BJ (cell line): ENCODE measurements at regions of chr3 and their contacts with region 1.

Region 1: GRCh38 chr3:8970971-8971589 is 7.8 kb upstream of the RAD18 start:
- DNase-seq: no peak
- H3K4me3 ChIP-seq: no peak overlapping the region
- H3K27me3 ChIP-seq: no peaks in the 10 kb centered on the region
- CTCF ChIP-seq: peak; percentile 93

Region 2: DNA sequence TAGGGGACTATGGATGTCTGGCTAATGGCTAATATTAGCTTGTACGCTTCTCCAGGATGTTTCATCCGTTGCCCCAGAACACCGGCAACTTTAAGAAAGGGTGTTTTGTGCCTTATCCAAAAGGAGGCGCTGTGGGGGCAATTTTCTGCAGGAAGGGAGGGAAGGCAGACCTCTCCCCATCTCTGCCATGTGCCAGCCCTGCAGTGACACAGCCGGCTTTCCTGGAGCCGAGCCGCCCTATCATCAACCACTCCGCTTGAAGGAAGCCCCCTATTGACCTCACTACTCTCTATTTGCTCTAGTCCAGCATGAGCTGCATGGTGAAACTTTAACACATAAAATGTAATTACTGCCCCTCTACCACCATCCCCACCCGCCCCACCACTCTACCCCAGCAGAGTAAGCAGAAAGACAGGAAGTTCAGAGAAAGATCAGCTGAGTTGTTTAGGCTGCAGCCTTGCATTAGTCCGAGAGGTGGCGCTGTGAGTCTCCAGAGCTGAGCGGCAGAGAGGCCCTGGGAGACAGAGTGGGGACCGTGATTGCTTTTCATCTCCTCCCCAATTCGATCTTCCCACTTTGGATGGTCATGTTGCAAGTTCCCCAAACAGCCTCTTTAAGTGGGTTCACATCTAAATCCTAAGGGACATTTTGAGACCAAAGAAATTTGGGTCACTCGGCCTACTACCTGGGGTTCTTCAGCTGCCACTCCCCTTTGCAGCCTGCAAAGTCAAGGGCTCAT is 16.7 kb after region 1 on chr3:
- CTCF ChIA-PET with region 1: interaction called, 83 read pairs
- POLR2A ChIA-PET with region 1: no interaction called
- DNase-seq: no peak
- H3K4me3 ChIP-seq: no peak overlapping the region
- H3K27me3 ChIP-seq: peaks cover 6% of the 10 kb centered on the region; the same call in 1 of the 2 replicates
- CTCF ChIP-seq: peak; percentile 77

Region 3: GRCh38 chr3:9067352-9067975 is 96.4 kb after region 1 on chr3:
- CTCF ChIA-PET with region 1: interaction called, 49 read pairs
- POLR2A ChIA-PET with region 1: no interaction called
- DNase-seq: no peak
- H3K4me3 ChIP-seq: no peak overlapping the region
- H3K27me3 ChIP-seq: peaks cover 13% of the 10 kb centered on the region
- CTCF ChIP-seq: peak; percentile 98